A673 (cell line): ENCODE measurements at regions of chr11 and their contacts with region 1.

Region 1: DNA sequence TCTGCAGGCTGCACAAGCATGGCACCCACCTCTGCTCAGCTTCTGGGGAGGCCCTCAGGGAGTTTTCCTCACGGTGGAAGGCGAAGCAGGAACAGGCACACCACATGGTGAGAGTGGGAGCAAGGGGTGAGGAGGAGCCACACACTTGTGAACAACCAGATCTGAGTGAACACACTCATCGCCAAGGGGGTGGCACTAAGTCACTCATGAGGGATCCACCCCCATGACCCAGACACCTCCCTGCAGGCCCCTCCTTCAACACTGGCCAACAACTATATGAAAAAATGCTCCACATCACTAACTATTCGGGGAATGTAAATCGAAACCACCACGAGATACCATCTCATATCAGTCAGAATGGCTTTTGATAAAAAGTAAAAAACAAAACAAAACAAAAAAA is 722 bp upstream of the KRTAP5-2 start:
- DNase-seq: no peak
- H3K4me3 ChIP-seq: no peak overlapping the region
- H3K27ac ChIP-seq: no peak overlapping the region
- H3K4me1 ChIP-seq: no peaks in the 10 kb centered on the region
- H3K27me3 ChIP-seq: peaks cover 11% of the 10 kb centered on the region
- CTCF ChIP-seq: no peak

Region 2: GRCh38 chr11:1113405-1114201 is 485.2 kb before region 1 on chr11:
- CTCF ChIA-PET with region 1: no interaction called
- POLR2A ChIA-PET with region 1: no interaction called
- intact Hi-C with region 1: no loop called
- DNase-seq: no peak
- H3K4me3 ChIP-seq: no peak overlapping the region
- H3K27ac ChIP-seq: no peak overlapping the region
- H3K4me1 ChIP-seq: no peaks in the 10 kb centered on the region
- H3K27me3 ChIP-seq: no peaks in the 10 kb centered on the region
- CTCF ChIP-seq: no peak

Region 3: GRCh38 chr11:1572197-1573076 is 26.4 kb before region 1 on chr11 and contains the start of gene DUSP8:
- CTCF ChIA-PET with region 1: interaction called, 12 read pairs
- POLR2A ChIA-PET with region 1: no interaction called
- intact Hi-C with region 1: no loop called
- DNase-seq: peak; percentile 81
- H3K4me3 ChIP-seq: peak within 1 kb of the TSS; percentile 38
- H3K27ac ChIP-seq: no peak within 1 kb of the TSS
- H3K4me1 ChIP-seq: peaks cover 6% of the 10 kb centered on the region
- H3K27me3 ChIP-seq: peaks cover 25% of the 10 kb centered on the region
- CTCF ChIP-seq: no peak
- total RNA-seq, gene DUSP8: 0.70 and 1.9 TPM in 2 replicates

Region 4: GRCh38 chr11:1640076-1640946 is 41.5 kb after region 1 on chr11:
- CTCF ChIA-PET with region 1: interaction called, 16 read pairs
- POLR2A ChIA-PET with region 1: no interaction called
- intact Hi-C with region 1: no loop called
- DNase-seq: peak; percentile 33
- H3K4me3 ChIP-seq: no peak overlapping the region
- H3K27ac ChIP-seq: no peak overlapping the region
- H3K4me1 ChIP-seq: no peaks in the 10 kb centered on the region
- H3K27me3 ChIP-seq: peaks cover 4% of the 10 kb centered on the region
- CTCF ChIP-seq: peak; percentile 81